ENCODE measurements at regions of chr20 and their contacts with region 1.

Region 1: DNA sequence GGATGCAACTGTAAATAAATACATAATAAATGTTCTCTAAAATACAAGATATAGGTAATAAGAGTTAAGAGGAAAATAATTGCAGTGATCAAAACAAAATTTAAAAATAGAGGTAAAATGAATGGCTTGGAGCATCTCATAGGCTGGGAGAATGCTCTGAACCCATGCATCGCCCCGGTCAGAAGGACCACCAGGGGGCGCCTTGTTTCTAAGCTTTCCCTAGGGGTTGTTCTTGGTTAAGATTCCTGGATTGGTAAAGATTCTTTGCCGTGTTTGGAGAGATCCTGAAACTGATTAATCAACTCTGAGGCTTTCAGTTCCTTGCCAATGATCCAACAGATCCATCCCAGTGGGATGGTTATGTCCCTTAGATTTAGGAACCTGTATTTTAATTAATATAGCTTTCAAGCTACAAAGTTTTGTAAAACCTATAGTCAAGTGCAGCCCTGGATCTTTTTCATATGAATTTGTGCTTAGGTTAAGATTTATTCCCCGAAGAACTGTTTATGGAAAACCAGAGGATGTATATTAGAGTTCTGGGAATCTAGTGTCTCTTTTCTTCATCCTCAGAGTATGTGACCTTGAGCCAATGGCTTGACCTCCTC is 45.3 kb upstream of the PRELID3B start:
- DNase-seq: peak; percentile 68 to 92 (median 82)
- ATAC-seq: peak; percentile 91 to 99
- H3K4me3 Mint-ChIP-seq: no peak overlapping the region
- H3K27ac Mint-ChIP-seq: peak overlapping the region in 5 of 10 donors; percentile 50 to 75 (median 70)
- H3K4me1 Mint-ChIP-seq: peaks cover 0 to 8% (median 3%) of the 10 kb centered on the region in 4 donors
- H3K27me3 Mint-ChIP-seq: peaks cover 0 to 8% (median 0%) of the 10 kb centered on the region in 5 donors

Region 2: GRCh38 chr20:59207742-59208357 is 119.9 kb after region 1 on chr20:
- POLR2A ChIA-PET with region 1: interaction called, 13 read pairs
- DNase-seq: peak; percentile 63 to 92 (median 78)
- ATAC-seq: peak; percentile 96 to 98
- H3K4me3 Mint-ChIP-seq: no peak overlapping the region
- H3K27ac Mint-ChIP-seq: peak overlapping the region; percentile 17 to 96 (median 84)
- H3K4me1 Mint-ChIP-seq: peaks cover 17 to 50% (median 36%) of the 10 kb centered on the region in 4 donors
- H3K27me3 Mint-ChIP-seq: no peaks in the 10 kb centered on the region

Region 3: GRCh38 chr20:59222253-59223181 is 134.6 kb after region 1 on chr20:
- POLR2A ChIA-PET with region 1: interaction called, 13 read pairs
- DNase-seq: peak; percentile 67 to 86 (median 81)
- ATAC-seq: peak; percentile 91 to 95
- H3K4me3 Mint-ChIP-seq: peak overlapping the region; percentile 75 to 91 (median 86)
- H3K27ac Mint-ChIP-seq: peak overlapping the region; percentile 81 to 94 (median 92)
- H3K4me1 Mint-ChIP-seq: peaks cover 5 to 29% (median 25%) of the 10 kb centered on the region in 4 donors
- H3K27me3 Mint-ChIP-seq: no peaks in the 10 kb centered on the region

Measured in naive thymus-derived CD8-positive, alpha-beta T cell (primary cell).